ENCODE measurements at regions of chr17 and their contacts with region 1.

Region 1: GRCh38 chr17:48892940-48893645 is 506 bp downstream of the ATP5MC1 start:
- DNase-seq: no peak
- H3K4me3 ChIP-seq: peak overlapping the region; percentile 73 to 96
- H3K27ac ChIP-seq: peak overlapping the region; percentile 46 to 72
- H3K4me1 ChIP-seq: peaks cover 7 to 8% of the 10 kb centered on the region in 2 donors
- H3K27me3 ChIP-seq: no peaks in the 10 kb centered on the region
- CTCF ChIP-seq: no peak

Region 2: GRCh38 chr17:47698749-47699535 is 1194.2 kb before region 1 on chr17:
- intact Hi-C with region 1: loop called (anchors 10 kb)
- DNase-seq: no peak
- H3K4me3 ChIP-seq: no peak overlapping the region
- H3K27ac ChIP-seq: no peak overlapping the region
- H3K4me1 ChIP-seq: peaks cover 4 to 5% of the 10 kb centered on the region in 2 donors
- H3K27me3 ChIP-seq: no peaks in the 10 kb centered on the region
- CTCF ChIP-seq: peak; percentile 66 to 98 (median 98)

Region 3: GRCh38 chr17:48830840-48831548 is 62.1 kb before region 1 on chr17 and contains the start of gene CALCOCO2:
- intact Hi-C with region 1: loop called (anchors 2 kb)
- DNase-seq: peak; percentile 81 to 98
- H3K4me3 ChIP-seq: peak within 1 kb of the TSS; percentile 70 to 86
- H3K27ac ChIP-seq: peak within 1 kb of the TSS; percentile 88 to 94
- H3K4me1 ChIP-seq: peaks cover 9 to 23% of the 10 kb centered on the region in 2 donors
- H3K27me3 ChIP-seq: no peaks in the 10 kb centered on the region
- CTCF ChIP-seq: peak in 1 of 3 experiments; percentile 6
- total RNA-seq, gene CALCOCO2: 34.9 TPM

Region 4: GRCh38 chr17:48869821-48870318 is 23.2 kb before region 1 on chr17:
- intact Hi-C with region 1: no loop called
- DNase-seq: no peak
- H3K4me3 ChIP-seq: no peak overlapping the region
- H3K27ac ChIP-seq: no peak overlapping the region
- H3K4me1 ChIP-seq: no peaks in the 10 kb centered on the region
- H3K27me3 ChIP-seq: no peaks in the 10 kb centered on the region
- CTCF ChIP-seq: no peak

Region 5: GRCh38 chr17:48908047-48908843 is 15.2 kb after region 1 on chr17 and contains the start of gene UBE2Z:
- intact Hi-C with region 1: loop called (anchors 1 kb)
- DNase-seq: peak; percentile 79 to 97
- H3K4me3 ChIP-seq: peak within 1 kb of the TSS; percentile 75 to 99
- H3K27ac ChIP-seq: peak within 1 kb of the TSS; percentile 86 to 96
- H3K4me1 ChIP-seq: peaks cover 0 to 24% of the 10 kb centered on the region in 2 donors
- H3K27me3 ChIP-seq: no peaks in the 10 kb centered on the region
- CTCF ChIP-seq: peak in 2 of 3 experiments; percentile 19 to 44
- total RNA-seq, gene UBE2Z: 68.8 TPM

Region 6: DNA sequence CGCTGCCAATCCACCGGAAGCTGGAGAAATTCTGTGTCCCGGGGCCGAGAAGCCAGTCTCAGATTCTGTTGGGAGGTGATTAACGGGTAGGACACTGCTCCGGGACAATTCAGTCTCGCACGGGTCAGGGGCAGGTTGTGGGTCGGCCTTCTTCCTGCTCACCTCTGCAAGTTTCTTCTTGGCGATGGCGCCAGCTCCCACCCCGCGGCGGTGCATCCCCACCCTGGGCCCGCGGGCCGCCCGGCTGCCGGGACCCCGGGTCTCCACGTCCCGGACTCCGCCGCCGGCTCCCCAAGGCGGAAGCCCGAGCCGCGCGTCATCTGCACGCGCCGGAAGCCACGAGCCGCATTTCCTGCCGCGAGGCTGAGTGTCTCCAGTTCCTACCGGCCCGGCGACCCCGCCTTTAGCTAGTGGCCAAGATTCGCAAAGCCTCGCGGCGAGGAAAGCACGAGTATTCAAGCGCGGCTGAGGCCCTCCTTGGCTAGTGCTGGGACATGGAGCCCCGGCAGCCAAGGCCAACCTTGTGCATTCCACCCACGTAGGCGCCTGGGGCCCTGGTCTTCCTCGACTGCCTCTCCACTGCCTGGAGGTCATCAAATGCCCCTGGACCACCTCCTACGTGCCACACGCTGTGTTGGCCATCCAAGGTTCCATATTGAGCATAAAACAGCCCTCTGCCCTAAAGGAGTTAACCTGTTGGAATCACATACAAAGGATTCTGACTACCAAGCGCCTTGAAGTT is 51.6 kb after region 1 on chr17 and contains the start of gene SNF8:
- intact Hi-C with region 1: loop called (anchors 1 kb)
- DNase-seq: peak; percentile 40 to 96
- H3K4me3 ChIP-seq: peak within 1 kb of the TSS; percentile 65 to 72
- H3K27ac ChIP-seq: peak within 1 kb of the TSS; percentile 85 to 94
- H3K4me1 ChIP-seq: peaks cover 0 to 20% of the 10 kb centered on the region in 2 donors
- H3K27me3 ChIP-seq: no peaks in the 10 kb centered on the region
- CTCF ChIP-seq: no peak
- total RNA-seq, gene SNF8: 36.5 TPM

Region 7: GRCh38 chr17:49191917-49192741 is 299.0 kb after region 1 on chr17:
- intact Hi-C with region 1: loop called (anchors 1 kb)
- DNase-seq: peak; percentile 79 to 98
- H3K4me3 ChIP-seq: peak overlapping the region; percentile 58 to 76
- H3K27ac ChIP-seq: peak overlapping the region; percentile 92 to 99
- H3K4me1 ChIP-seq: peaks cover 0 to 3% of the 10 kb centered on the region in 2 donors
- H3K27me3 ChIP-seq: no peaks in the 10 kb centered on the region
- CTCF ChIP-seq: peak in 2 of 3 experiments; percentile 8 to 36

Measured in ascending aorta (tissue), 2 donors.